ENCODE measurements at regions of chr14 and their contacts with region 1.

Region 1: DNA sequence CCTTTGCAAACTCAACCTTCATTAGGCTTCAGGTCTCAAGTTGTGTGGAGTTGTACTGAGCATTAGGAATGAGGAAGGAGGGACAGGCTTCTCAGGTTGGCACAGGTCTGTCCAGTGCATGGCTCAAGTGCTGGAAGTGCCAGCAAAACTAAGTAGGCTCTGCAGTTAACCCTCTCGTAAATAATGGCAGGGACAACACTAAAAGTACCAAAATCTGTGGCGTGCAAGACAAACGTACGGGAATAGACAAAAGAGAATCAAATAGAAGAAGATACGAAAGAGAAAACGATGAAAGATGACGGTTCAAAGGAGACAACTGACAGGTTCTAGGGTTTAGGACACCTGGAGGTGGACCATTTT is 612 bp downstream of the TRAPPC6B start:
- DNase-seq: no peak
- ATAC-seq: no peak
- H3K4me3 Mint-ChIP-seq: peak overlapping the region; percentile 86
- H3K27ac Mint-ChIP-seq: peak overlapping the region; percentile 88
- H3K4me1 Mint-ChIP-seq: peaks cover 35% of the 10 kb centered on the region
- H3K27me3 Mint-ChIP-seq: no peaks in the 10 kb centered on the region

Region 2: GRCh38 chr14:39102969-39103957 is 66.3 kb before region 1 on chr14 and contains the start of gene SEC23A:
- POLR2A ChIA-PET with region 1: interaction called, 15 read pairs
- DNase-seq: peak; percentile 84
- ATAC-seq: peak; percentile 96
- H3K4me3 Mint-ChIP-seq: peak within 1 kb of the TSS; percentile 99
- H3K27ac Mint-ChIP-seq: peak within 1 kb of the TSS; percentile 98
- H3K4me1 Mint-ChIP-seq: peaks cover 37% of the 10 kb centered on the region
- H3K27me3 Mint-ChIP-seq: no peaks in the 10 kb centered on the region
- total RNA-seq, gene SEC23A: 66.2 to 66.8 TPM

Region 3: DNA sequence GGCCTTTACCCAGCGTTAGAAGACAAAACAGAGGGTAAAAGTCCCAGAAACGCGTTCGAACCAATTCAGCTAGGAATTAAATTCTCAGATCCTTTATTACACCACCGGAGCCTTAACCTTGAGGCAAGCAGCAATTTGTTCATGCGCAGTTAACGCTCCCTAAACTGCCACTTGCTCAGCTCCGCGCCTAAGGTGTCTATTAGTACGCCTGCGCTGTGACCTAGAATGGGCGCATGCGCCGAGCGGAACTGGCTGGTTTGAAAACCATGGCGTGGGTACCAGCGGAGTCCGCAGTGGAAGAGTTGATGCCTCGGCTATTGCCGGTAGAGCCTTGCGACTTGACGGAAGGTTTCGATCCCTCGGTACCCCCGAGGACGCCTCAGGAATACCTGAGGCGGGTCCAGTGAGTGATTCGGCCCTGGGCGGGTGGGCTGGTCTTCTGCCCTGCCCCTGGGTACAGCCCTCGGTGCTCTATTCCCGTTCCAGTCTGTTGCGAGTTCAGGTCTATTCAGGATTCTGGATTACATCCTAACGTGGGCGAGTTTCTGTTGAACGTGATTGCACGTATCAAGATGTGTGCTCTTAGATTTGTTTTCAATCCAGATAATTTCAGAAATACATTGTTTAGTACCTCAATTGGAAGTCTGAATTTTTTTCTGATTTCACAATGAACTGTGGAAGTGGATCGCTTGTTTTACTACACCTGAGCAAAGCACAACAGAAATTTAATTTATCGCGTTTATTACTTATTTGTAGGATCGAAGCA is 55.3 kb before region 1 on chr14 and contains the start of gene GEMIN2:
- POLR2A ChIA-PET with region 1: interaction called, 31 read pairs
- DNase-seq: peak; percentile 92
- ATAC-seq: peak; percentile 100
- H3K4me3 Mint-ChIP-seq: peak within 1 kb of the TSS; percentile 96
- H3K27ac Mint-ChIP-seq: peak within 1 kb of the TSS; percentile 95
- H3K4me1 Mint-ChIP-seq: peaks cover 25% of the 10 kb centered on the region
- H3K27me3 Mint-ChIP-seq: no peaks in the 10 kb centered on the region
- total RNA-seq, gene GEMIN2: 23.1 to 24.9 TPM

Region 4: GRCh38 chr14:39232554-39233415 is 63.3 kb after region 1 on chr14:
- POLR2A ChIA-PET with region 1: interaction called, 20 read pairs
- DNase-seq: no peak
- ATAC-seq: no peak
- H3K4me3 Mint-ChIP-seq: peak overlapping the region; percentile 8
- H3K27ac Mint-ChIP-seq: peak overlapping the region; percentile 31
- H3K4me1 Mint-ChIP-seq: peaks cover 44% of the 10 kb centered on the region
- H3K27me3 Mint-ChIP-seq: no peaks in the 10 kb centered on the region

Region 5: DNA sequence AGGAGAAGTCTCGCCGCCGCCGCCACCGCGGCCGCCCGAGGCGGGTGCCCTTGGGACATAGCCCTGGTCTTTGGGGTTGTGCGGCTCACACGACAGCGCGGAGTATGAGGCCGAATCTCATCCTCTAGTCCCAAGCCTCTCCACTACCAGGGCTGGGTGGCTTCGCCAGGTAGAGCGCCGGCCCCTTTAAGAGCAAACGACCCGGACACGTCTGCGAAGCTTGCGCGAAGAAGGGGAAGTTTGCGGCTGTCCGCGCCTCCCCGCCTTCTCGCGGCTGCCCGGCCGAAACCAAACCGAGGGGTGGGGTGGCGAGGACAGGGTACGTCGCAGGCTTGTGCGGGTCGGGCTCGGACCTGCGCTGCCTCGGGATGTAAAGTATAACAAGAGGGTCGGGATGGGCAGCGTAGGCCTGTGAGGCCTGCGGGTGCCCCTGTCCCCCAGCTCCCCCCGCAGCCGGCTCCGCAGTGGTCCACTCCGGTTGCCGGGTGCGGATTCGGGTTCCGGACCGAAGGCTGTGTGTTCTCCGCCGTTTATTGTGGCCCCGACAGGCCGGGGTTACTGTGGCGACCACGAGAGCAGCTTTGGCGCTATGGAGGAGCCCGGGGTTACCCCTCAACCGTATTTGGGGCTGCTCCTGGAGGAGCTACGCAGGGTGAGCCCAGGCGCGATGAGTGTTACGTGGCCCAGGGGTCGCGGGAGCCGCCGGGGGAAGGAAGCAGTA is 97.5 kb after region 1 on chr14:
- POLR2A ChIA-PET with region 1: interaction called, 29 read pairs
- DNase-seq: peak; percentile 86
- ATAC-seq: peak; percentile 88
- H3K4me3 Mint-ChIP-seq: peak overlapping the region; percentile 78
- H3K27ac Mint-ChIP-seq: peak overlapping the region; percentile 95
- H3K4me1 Mint-ChIP-seq: peaks cover 36% of the 10 kb centered on the region
- H3K27me3 Mint-ChIP-seq: no peaks in the 10 kb centered on the region